Ascending aorta (tissue), 2 donors: ENCODE measurements at regions of chr11 and their contacts with region 1.

Region 1: DNA sequence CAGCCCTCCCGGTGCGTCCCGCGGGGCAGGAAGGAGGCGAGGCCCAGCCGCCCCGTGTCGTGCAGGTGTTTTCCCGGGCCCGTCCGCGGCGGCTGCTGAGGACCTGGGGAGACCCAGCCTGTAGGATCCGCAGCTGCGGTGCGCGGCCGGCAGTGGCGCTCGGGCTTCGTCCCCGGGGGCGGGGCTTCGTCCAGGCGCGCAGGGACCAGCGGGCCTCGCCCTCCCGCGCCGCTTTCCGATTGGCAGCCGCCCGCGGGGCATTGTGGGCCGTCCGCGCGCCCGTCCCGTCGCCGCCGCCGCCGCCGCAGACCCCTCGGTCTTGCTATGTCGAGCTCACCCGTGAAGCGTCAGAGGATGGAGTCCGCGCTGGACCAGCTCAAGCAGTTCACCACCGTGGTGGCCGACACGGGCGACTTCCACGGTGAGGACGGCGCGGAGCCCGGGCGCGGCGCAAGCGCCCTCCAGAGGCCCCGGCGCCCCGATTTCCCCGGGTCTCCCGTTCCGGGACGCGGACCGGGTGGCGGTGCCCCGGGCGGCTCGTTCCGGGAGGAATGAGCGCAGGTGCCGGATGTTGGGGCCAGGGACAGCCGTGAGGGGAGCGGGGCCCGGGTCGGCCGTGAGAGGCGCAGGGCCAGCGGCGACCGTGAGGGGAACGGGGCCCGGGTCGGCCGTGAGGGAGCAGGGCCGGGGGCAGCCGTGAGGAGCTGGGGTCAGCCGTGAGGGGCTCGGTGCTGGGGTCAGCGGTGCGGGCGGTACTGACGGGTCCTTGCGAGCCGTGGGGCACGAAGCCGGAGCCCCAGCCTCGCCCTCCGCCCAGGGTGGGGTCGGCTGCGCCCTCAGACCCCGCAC is at the start of gene TALDO1:
- DNase-seq: peak; percentile 50 to 94
- H3K4me3 ChIP-seq: peak within 1 kb of the TSS; percentile 98 to 99
- H3K27ac ChIP-seq: peak within 1 kb of the TSS; percentile 94 to 97
- H3K4me1 ChIP-seq: peaks cover 0 to 18% of the 10 kb centered on the region in 2 donors
- H3K27me3 ChIP-seq: no peaks in the 10 kb centered on the region
- CTCF ChIP-seq: peak in 2 of 3 experiments; percentile 16 to 34
- total RNA-seq, gene TALDO1: 245 TPM

Region 2: DNA sequence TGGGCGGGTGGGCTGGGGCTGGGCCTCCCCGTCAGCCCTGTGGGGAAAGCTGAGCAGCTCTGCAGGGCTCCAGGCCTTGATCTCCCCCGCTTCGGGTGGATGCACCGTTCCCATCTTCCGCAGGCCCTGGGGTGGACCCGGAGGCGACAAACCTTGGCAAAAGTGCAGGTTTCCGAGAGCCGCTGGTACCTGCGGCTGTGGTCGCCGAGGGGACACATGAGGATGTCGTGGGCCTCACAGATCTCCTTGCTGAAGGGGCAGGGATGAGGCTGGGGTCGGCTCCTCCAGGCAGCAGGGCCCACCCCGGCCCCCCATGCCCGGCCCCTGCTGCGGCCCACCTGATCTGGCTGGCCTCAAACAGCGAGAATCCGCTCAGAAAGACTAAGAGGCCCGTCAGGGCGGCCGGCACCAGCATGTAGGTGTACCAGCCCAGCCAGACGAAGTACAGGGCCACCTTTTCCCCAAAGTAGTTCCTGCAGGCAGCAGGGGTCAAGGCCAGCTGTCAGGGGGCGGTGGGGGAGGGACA is 317.4 kb before region 1 on chr11:
- intact Hi-C with region 1: no loop called
- DNase-seq: no peak
- H3K4me3 ChIP-seq: no peak overlapping the region
- H3K27ac ChIP-seq: no peak overlapping the region
- H3K4me1 ChIP-seq: no peaks in the 10 kb centered on the region
- H3K27me3 ChIP-seq: no peaks in the 10 kb centered on the region
- CTCF ChIP-seq: no peak

Region 3: DNA sequence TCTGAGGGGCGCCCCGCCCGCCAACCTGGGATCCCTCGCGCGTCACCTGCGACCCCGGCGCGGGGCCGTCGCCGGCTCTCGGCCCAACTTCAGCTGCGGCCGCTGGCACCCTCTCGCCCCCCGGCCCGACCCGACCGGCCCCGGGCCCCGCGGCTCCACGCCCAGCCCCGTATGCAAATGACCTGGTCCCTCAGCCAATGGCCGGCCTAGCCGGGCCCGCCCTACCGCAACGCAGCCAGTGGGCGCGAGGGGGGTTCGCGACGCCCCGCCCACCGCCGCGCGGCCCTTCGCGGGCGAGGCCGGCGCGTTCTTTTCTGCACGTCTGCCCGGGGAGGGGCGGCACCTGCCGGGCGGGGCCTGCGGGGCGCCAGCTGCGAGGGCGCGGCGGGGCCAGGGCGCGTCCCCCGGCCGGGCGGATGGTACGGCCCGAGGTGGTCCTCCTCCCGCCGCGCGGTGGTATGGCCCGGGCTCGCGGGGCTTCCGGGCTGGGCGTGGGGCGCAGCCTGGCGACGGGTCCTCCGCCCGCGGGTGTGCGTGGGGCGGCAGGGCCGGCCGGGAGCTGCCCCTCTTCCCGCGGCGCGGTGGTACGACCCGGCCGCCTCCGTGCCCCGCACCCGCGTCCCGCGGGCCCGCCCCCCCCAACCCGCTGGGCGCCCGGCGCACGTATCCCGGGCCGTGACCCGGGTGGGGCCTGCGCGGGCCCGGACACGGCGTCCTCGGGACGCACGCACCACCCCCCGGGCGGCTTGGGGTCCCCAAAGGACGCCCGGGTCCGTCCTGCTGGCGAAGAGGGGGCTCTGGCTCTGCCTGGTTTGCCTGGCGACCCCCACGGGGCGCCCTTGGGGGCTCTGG is 178.8 kb before region 1 on chr11:
- intact Hi-C with region 1: loop called (anchors 2 kb)
- DNase-seq: peak; percentile 83 to 97
- H3K4me3 ChIP-seq: peak overlapping the region; percentile 72 to 76
- H3K27ac ChIP-seq: peak overlapping the region; percentile 77 to 89
- H3K4me1 ChIP-seq: peaks cover 4 to 9% of the 10 kb centered on the region in 2 donors
- H3K27me3 ChIP-seq: no peaks in the 10 kb centered on the region
- CTCF ChIP-seq: no peak

Region 4: GRCh38 chr11:777288-778255 is 30.2 kb after region 1 on chr11 and contains the start of gene GATD1:
- intact Hi-C with region 1: loop called (anchors 1 kb)
- DNase-seq: peak; percentile 49 to 94
- H3K4me3 ChIP-seq: peak within 1 kb of the TSS; percentile 65 to 88
- H3K27ac ChIP-seq: peak within 1 kb of the TSS; percentile 56 to 75
- H3K4me1 ChIP-seq: peaks cover 8 to 23% of the 10 kb centered on the region in 2 donors
- H3K27me3 ChIP-seq: no peaks in the 10 kb centered on the region
- CTCF ChIP-seq: no peak
- total RNA-seq, gene GATD1: 12.2 TPM

Region 5: GRCh38 chr11:798093-798713 is 50.8 kb after region 1 on chr11 and contains the start of gene SLC25A22:
- intact Hi-C with region 1: loop called (anchors 5 kb)
- DNase-seq: peak in 1 of 2 donors; percentile 83
- H3K4me3 ChIP-seq: peak within 1 kb of the TSS; percentile 78 to 85
- H3K27ac ChIP-seq: peak within 1 kb of the TSS; percentile 78 to 79
- H3K4me1 ChIP-seq: peaks cover 12 to 20% of the 10 kb centered on the region in 2 donors
- H3K27me3 ChIP-seq: no peaks in the 10 kb centered on the region
- CTCF ChIP-seq: peak; percentile 78 to 93 (median 86)
- total RNA-seq, gene SLC25A22: 5.6 TPM

Region 6: DNA sequence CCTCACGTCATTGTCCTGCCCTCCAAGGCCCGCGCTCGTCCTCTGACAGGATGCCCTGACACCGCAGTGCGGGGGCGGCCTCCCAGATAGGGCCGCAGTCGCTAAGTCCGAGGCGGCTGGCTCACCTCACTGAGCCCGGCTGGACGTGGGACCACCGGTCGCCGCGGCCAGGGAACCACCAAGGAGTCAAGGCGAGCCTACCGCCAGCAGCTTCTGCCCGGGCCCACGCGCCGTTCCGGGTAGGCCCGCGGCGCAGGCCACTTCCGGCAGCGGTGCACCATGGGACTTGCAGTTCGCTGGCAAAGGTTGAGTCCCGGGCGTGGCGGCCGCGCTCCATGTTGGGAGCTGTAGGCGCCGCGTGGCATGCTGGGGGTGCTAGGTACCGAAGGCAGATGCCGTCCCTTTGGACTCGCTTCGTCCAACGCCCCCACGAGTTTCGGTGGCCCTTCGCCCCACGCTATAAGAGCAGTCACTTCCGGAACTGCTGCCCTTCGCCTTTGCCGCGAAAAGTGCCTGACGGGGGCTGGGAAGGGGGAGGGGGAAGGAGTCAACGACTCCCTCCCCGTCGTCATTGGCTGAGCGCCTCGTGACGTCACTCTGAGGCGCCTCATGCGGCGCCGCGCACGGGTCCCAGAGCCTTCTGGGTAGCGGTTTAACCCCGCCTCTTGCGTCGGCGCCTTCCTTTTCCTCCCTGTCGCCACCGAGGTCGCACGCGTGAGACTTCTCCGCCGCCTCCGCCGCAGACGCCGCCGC is 62.1 kb after region 1 on chr11 and contains the start of gene RPLP2:
- intact Hi-C with region 1: no loop called
- DNase-seq: peak; percentile 88 to 99
- H3K4me3 ChIP-seq: peak within 1 kb of the TSS; percentile 73 to 97
- H3K27ac ChIP-seq: peak within 1 kb of the TSS; percentile 93 to 98
- H3K4me1 ChIP-seq: peaks cover 9 to 34% of the 10 kb centered on the region in 2 donors
- H3K27me3 ChIP-seq: no peaks in the 10 kb centered on the region
- CTCF ChIP-seq: no peak
- total RNA-seq, gene RPLP2: 897 TPM